OCI-LY7 (cell line): ENCODE measurements at regions of chr20 and their contacts with region 1.

Region 1: GRCh38 chr20:324177-325044 is 941 bp upstream of the SOX12 start:
- DNase-seq: peak; percentile 94
- H3K4me3 ChIP-seq: peak overlapping the region; percentile 98
- H3K27ac ChIP-seq: peak overlapping the region; percentile 81
- H3K4me1 ChIP-seq: peaks cover 25% of the 10 kb centered on the region
- CTCF ChIP-seq: peak; percentile 53

Region 2: DNA sequence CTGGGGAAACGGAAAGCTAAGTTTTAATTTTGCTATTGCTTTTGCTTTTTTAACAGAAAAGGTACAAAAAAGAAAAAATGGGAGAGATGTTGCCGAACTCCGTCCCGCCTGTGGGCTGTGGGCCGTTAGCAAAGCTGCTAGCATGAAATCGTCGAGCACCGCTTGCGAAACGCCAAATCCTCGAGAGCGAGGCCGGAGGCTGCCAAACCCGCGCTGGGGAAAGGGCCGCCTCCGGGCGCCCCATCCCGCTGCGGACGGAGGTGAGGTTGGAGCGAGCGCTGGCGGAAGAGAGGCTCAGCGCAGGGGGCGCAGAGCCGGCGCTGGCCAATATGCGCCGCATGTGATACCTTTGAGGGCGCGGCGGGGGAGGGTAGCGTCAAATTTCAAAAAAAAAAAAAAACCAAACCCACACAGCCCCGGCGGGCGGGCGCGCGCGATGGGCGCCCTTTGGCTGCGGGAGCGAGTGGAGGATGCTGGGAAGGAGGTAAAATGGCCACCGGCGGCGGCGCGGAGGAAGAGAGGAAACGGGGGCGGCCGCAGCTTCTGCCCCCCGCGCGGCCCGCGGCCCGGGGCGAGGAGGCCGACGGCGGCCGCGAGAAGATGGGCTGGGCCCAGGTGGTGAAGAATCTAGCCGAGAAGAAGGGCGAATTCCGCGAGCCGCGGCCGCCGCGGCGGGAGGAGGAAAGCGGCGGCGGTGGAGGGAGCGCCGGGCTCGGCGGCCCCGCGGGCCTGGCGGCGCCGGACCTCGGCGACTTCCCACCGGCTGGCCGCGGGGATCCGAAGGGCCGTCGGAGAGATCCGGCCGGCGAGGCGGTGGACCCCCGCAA is 27.1 kb before region 1 on chr20 and contains the start of gene ZCCHC3:
- CTCF ChIA-PET with region 1: interaction called, 3 read pairs
- POLR2A ChIA-PET with region 1: interaction called, 10 read pairs
- intact Hi-C with region 1: loop called (anchors 1 kb)
- DNase-seq: peak; percentile 95
- H3K4me3 ChIP-seq: peak within 1 kb of the TSS; percentile 80
- H3K27ac ChIP-seq: peak within 1 kb of the TSS; percentile 70
- H3K4me1 ChIP-seq: peaks cover 31% of the 10 kb centered on the region
- CTCF ChIP-seq: peak; percentile 23; the same call in 1 of the 2 replicates
- total RNA-seq, gene ZCCHC3: 39.8 and 45.3 TPM in 2 replicates

Region 3: GRCh38 chr20:309841-310644 is 14.4 kb before region 1 on chr20:
- CTCF ChIA-PET with region 1: interaction called, 6 read pairs
- POLR2A ChIA-PET with region 1: interaction called, 12 read pairs
- intact Hi-C with region 1: loop called (anchors 1 kb)
- DNase-seq: peak; percentile 98
- H3K4me3 ChIP-seq: peak overlapping the region; percentile 66
- H3K27ac ChIP-seq: no peak overlapping the region
- H3K4me1 ChIP-seq: peaks cover 17% of the 10 kb centered on the region
- CTCF ChIP-seq: no peak

Region 4: DNA sequence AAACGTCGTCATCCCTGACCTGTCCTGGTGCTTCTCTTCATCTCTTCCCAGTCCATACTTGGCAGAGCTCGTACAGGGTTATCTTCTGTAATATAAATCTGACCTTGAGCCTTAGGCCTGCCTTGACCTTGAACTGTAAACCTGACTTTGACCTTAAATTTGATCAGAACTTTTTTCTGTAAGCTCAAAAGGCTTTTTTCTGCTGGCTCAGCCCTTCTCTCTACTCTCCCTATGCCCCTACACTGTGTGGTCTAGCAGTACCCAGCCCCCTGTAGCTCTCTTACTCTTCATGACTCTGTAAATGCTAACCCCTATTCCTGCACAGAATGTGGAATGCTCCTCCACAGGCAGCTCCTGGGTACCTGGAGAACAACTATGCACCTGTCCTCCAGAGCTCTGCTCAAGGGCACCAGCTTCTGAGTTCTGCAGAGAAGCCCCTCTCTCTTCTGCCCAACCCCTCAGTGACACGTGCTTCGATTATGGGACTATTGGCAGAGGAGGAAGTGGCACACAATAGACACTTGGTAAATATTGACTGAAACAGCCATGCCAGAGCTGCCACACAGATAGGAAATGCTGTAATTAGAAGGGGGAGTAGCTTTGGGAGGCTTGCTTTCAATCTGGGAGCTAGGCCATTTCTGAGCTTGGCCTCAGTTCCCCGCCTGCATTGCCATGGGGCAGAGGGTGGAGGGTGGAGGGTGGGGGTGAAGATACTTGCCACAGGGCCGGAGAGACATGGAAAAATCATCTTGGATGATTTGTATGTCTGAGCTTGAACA is 957.1 kb after region 1 on chr20:
- CTCF ChIA-PET with region 1: no interaction called
- POLR2A ChIA-PET with region 1: no interaction called
- intact Hi-C with region 1: no loop called
- DNase-seq: no peak
- H3K4me3 ChIP-seq: no peak overlapping the region
- H3K27ac ChIP-seq: no peak overlapping the region
- H3K4me1 ChIP-seq: no peaks in the 10 kb centered on the region
- CTCF ChIP-seq: no peak